ENCODE measurements at regions of chr1 and their contacts with region 1.

Region 1: DNA sequence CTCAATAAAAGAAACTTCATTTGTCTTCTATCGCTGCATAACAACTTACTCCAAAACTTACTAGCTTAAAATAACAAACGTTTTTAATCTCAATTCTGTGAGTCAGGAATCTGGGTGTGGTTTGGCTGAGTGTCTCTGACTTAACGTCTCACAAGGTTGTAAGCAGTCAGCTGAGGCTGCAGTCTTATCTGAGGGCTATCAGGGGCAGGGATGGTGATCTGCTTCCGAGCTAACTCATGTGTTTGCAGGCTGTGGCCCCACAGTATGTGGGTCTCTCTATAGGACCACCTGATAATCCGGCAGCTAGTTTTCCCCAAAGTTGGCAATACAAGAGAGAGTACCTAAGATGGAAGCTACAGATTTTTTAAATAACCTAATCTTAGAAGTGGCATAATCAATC is 234.2 kb upstream of the FGGY start:
- DNase-seq: no peak
- H3K4me3 ChIP-seq: no peak overlapping the region
- H3K27ac ChIP-seq: no peak overlapping the region
- H3K4me1 ChIP-seq: peaks cover 2 to 25% (median 14%) of the 10 kb centered on the region in 4 experiments; a peak in 4 of 7 replicates
- H3K27me3 ChIP-seq: no peaks in the 10 kb centered on the region
- CTCF ChIP-seq: no peak
- EP300 ChIP-seq: no peak
- POLR2A ChIP-seq: no peak
- RAD21 ChIP-seq: no peak

Region 2: GRCh38 chr1:59076612-59077011 is 13.9 kb after region 1 on chr1:
- CTCF ChIA-PET with region 1: interaction called, 10 read pairs
- POLR2A ChIA-PET with region 1: interaction called, 7 read pairs
- DNase-seq: no peak
- H3K4me3 ChIP-seq: peak overlapping the region in 1 of 4 experiments; percentile 48; a peak in 1 of 8 replicates
- H3K27ac ChIP-seq: no peak overlapping the region
- H3K4me1 ChIP-seq: peaks cover 13 to 42% (median 31%) of the 10 kb centered on the region in 4 experiments; a peak in 6 of 7 replicates
- H3K27me3 ChIP-seq: no peaks in the 10 kb centered on the region
- CTCF ChIP-seq: no peak
- EP300 ChIP-seq: no peak
- POLR2A ChIP-seq: no peak
- RAD21 ChIP-seq: no peak